A549 (cell line): ENCODE measurements at regions of chr11 and their contacts with region 1.

Region 1: DNA sequence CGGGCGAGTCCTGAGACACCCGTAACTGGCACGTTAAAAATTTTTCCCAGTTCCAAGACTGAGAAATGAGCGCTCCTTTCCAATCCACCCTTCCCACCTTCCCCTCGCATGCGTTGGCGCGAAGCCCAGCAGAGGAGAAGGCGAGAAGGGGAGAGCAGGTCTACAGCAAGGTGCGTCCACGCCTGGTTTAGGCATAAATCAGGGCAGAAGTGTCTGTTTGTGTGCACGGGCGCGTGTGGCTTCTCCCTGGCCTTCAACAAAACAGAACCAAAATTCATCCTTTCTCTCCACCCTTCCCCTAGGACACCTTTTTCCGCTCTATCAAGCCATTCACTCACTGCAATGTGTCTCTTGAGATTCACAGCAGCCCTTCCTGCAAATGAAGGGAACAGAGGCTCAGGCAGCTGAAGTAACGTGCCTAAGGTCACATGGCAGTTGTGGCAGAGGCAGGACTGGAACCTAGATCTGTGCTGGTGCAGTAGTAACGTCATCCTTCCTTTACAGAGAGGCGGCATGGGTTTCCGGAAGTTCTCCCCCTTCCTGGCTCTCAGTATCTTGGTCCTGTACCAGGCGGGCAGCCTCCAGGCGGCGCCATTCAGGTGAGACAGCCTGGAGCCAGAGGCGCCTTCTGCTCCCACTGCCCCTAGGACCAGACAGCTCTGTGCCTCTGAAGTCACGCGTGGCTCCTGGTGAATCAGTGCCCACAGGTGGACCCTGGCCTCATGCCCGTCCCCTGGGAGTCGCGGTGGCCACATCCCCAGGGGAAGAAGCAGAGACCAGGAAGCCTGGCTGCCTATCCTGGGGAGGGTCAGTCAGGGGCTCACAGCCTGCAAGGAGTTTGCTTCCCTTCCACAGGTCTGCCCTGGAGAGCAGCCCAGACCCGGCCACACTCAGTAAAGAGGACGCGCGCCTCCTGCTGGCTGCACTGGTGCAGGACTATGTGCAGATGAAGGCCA is 1.1 kb downstream of the CALCB start:
- DNase-seq: peak; percentile 69 to 85
- ATAC-seq: peak; percentile 80 to 96
- H3K4me3 ChIP-seq: peak overlapping the region; percentile 49
- H3K27ac ChIP-seq: peak overlapping the region in 1 of 2 experiments; percentile 70; a peak in 3 of 6 replicates
- H3K4me1 ChIP-seq: peaks cover 17% of the 10 kb centered on the region
- CTCF ChIP-seq: peak; percentile 78
- EP300 ChIP-seq: no peak
- POLR2A ChIP-seq: no peak
- RAD21 ChIP-seq: peak; percentile 79 to 80

Region 2: GRCh38 chr11:14789879-14790484 is 284.5 kb before region 1 on chr11:
- CTCF ChIA-PET with region 1: interaction called, 35 read pairs
- POLR2A ChIA-PET with region 1: no interaction called
- DNase-seq: peak in 1 of 2 experiments; percentile 10
- ATAC-seq: peak in 1 of 2 experiments; percentile 45; a peak in 1 of 6 replicates
- H3K4me3 ChIP-seq: no peak overlapping the region
- H3K27ac ChIP-seq: no peak overlapping the region
- H3K4me1 ChIP-seq: no peaks in the 10 kb centered on the region
- CTCF ChIP-seq: peak; percentile 68
- EP300 ChIP-seq: no peak
- POLR2A ChIP-seq: no peak
- RAD21 ChIP-seq: peak; percentile 67 to 73

Region 3: DNA sequence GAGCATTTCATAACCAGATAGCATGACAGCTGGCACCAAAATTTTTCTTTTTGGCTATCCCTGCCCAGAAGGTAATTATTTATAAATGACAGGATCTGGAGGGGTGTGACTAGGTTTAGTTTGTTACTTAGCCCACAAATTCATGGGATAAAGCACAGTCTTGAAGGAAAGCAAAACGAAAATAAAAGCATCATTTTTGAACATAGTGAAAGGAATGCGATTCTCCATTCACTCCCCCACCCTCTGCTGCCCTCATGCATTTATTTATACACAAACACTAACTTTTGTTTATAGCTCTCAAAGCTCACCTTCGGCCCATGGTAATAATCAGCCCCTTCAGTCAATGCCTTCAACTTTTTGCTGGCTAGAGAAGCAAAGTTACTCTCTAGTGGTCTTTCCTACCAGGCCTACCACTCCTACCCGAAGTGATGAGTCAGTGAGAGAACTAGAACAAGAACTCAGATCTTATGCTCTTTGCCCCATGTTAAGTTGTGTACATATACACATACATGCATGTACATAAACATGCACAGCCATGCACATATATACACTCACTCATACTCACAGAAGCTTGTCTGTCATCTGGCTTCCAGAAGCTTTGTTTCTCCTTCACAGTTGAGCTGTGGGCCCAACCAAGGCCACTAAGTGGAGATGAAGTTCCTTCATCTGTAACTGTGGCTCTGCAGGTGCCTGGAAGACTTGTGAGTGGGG is 124.9 kb before region 1 on chr11:
- CTCF ChIA-PET with region 1: no interaction called
- POLR2A ChIA-PET with region 1: no interaction called
- DNase-seq: no peak
- ATAC-seq: no peak
- H3K4me3 ChIP-seq: no peak overlapping the region
- H3K27ac ChIP-seq: no peak overlapping the region
- H3K4me1 ChIP-seq: no peaks in the 10 kb centered on the region
- CTCF ChIP-seq: no peak
- EP300 ChIP-seq: no peak
- POLR2A ChIP-seq: no peak
- RAD21 ChIP-seq: no peak

Region 4: DNA sequence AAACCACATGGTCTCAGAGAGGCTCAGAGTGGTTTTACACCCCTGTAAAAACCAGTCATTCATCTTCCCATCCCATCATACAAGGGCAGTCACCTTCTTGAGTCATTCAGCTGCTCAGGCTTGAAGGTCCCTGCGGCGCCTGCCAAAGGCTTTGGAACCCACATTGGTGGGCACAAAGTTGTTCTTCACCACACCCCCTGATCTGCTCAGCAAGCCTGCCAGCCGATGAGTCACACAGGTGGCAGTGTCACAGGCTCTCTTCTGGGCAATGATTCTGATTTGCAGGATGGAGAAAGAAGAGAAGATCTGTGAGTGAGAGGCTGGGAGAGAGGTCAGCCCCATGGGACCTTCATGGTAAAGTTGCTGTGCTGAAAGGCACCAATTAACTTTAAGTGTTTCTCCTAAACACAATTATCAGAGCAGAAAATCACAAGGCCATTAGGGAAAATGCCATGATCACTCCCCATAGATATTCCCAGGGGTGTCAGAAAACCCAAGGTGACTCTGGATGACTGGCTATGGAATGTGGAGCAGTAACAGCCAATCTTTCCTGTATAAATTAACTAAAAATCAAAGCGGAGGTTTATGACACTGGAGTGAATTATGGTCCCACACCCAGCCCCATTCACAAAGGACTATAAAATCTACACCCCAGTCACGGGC is 106.8 kb before region 1 on chr11:
- CTCF ChIA-PET with region 1: interaction called, 11 read pairs
- POLR2A ChIA-PET with region 1: no interaction called
- DNase-seq: no peak
- ATAC-seq: no peak
- H3K4me3 ChIP-seq: no peak overlapping the region
- H3K27ac ChIP-seq: no peak overlapping the region
- H3K4me1 ChIP-seq: no peaks in the 10 kb centered on the region
- CTCF ChIP-seq: no peak
- EP300 ChIP-seq: no peak
- POLR2A ChIP-seq: no peak
- RAD21 ChIP-seq: no peak

Region 5: DNA sequence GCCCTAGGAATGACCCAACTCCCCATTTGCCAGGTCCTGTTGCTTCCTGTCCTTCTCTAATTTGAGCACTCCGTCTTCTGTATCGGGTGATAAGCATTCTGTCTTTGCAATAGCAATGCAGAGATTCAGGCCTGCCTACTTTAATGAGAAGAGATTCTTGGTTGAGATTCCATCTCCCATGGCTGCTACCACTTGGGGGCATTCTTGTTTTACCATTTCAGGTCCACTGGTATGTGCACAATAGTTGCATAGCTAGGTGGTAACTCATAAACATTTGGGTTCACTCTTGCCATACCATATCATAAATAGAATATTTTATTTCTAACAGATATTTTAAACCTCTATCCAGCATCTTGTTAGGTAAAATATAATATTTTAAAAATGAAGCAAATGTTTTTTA is 35.5 kb before region 1 on chr11:
- CTCF ChIA-PET with region 1: interaction called, 12 read pairs
- POLR2A ChIA-PET with region 1: no interaction called
- DNase-seq: peak in 1 of 2 experiments; percentile 7
- ATAC-seq: peak in 1 of 2 experiments; percentile 34; a peak in 1 of 6 replicates
- H3K4me3 ChIP-seq: no peak overlapping the region
- H3K27ac ChIP-seq: no peak overlapping the region
- H3K4me1 ChIP-seq: no peaks in the 10 kb centered on the region
- CTCF ChIP-seq: no peak
- EP300 ChIP-seq: no peak
- POLR2A ChIP-seq: no peak
- RAD21 ChIP-seq: peak; percentile 34 to 46; a peak in 4 of 5 replicates

Region 6: DNA sequence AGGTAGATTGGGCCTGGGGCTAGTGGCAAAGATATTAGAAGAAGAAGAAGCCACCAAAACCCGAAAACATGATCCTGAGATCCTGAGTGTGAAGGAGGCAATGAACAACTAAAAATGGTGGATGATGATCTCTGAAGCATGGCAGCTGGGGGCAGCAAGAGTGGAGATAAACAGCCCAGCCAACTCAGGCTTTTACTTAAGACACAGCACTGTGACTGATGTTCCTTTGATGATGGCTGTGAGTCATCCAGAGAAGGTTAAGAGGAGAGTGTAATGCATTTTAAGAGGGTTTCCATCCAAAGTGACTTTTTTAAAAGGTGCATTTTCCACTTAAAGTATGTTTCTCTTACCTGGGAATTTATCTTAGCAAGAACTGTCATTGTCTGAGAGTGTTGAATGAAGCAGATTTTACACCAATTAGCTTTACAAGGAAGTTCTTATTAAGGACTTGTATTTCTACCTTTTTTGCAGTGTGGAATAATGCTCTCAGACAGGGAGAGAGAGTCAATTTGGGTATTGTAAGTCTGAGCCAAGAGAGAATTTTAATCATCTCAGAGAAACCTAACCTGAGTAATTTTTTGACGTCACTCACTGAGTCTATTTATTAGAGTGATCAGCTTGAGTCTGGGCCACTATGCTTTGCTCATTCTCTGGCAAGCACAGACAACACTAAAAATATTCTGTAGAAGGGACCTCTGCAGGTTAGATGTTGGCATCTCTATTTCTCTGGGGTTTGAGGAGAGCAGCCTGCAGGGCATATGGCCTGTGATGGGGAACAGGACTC is 15.2 kb before region 1 on chr11:
- CTCF ChIA-PET with region 1: interaction called, 12 read pairs
- POLR2A ChIA-PET with region 1: no interaction called
- DNase-seq: no peak
- ATAC-seq: no peak
- H3K4me3 ChIP-seq: no peak overlapping the region
- H3K27ac ChIP-seq: no peak overlapping the region
- H3K4me1 ChIP-seq: peaks cover 6% of the 10 kb centered on the region; the same call in 1 of the 3 replicates
- CTCF ChIP-seq: no peak
- EP300 ChIP-seq: no peak
- POLR2A ChIP-seq: no peak
- RAD21 ChIP-seq: no peak

Region 7: GRCh38 chr11:15101072-15101709 is 26.7 kb after region 1 on chr11:
- CTCF ChIA-PET with region 1: interaction called, 20 read pairs
- POLR2A ChIA-PET with region 1: no interaction called
- DNase-seq: peak; percentile 57 to 65
- ATAC-seq: peak; percentile 93 to 98
- H3K4me3 ChIP-seq: no peak overlapping the region
- H3K27ac ChIP-seq: no peak overlapping the region
- H3K4me1 ChIP-seq: no peaks in the 10 kb centered on the region
- CTCF ChIP-seq: peak; percentile 88
- EP300 ChIP-seq: no peak
- POLR2A ChIP-seq: no peak
- RAD21 ChIP-seq: peak; percentile 80 to 81

Region 8: DNA sequence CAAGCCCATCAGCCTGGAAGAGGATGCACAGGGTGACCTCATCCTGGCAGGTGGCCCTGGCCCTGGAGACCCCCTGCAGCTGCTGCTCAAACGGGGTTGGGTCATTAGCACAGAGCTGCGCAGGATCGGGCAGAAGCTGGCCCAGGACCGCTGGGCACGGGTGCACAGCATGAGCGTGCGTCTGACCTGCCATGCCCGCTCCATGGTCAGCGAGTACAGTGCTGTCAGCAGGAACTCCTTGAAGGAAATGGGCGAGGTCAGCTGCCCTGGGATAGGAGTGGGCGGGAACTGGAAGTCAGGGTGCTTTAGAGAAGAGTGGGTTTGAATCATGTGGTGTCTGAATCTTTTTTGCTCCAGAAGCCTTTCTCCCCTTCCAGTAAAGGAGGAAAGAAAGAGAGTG is 101.3 kb after region 1 on chr11:
- CTCF ChIA-PET with region 1: no interaction called
- POLR2A ChIA-PET with region 1: no interaction called
- DNase-seq: no peak
- ATAC-seq: no peak; a peak in 1 of 6 replicates
- H3K4me3 ChIP-seq: no peak overlapping the region
- H3K27ac ChIP-seq: no peak overlapping the region
- H3K4me1 ChIP-seq: no peaks in the 10 kb centered on the region
- CTCF ChIP-seq: no peak
- EP300 ChIP-seq: no peak
- POLR2A ChIP-seq: no peak
- RAD21 ChIP-seq: no peak